Endothelial cell of umbilical vein (primary cell): ENCODE measurements at regions of chr11 and their contacts with region 1.

Region 1: GRCh38 chr11:117178210-117179034 is at the start of gene SIDT2:
- DNase-seq: peak; percentile 98
- H3K4me3 ChIP-seq: peak within 1 kb of the TSS; percentile 32 to 70 (median 60)
- H3K27ac ChIP-seq: peak within 1 kb of the TSS; percentile 45
- H3K4me1 ChIP-seq: peaks cover 19% of the 10 kb centered on the region
- H3K27me3 ChIP-seq: no peaks in the 10 kb centered on the region
- CTCF ChIP-seq: no peak
- POLR2A ChIP-seq: peak; percentile 78
- total RNA-seq, gene SIDT2: 26.0 and 28.7 TPM in 2 replicates

Region 2: GRCh38 chr11:117045196-117045595 is 133.2 kb before region 1 on chr11:
- CTCF ChIA-PET with region 1: no interaction called
- POLR2A ChIA-PET with region 1: no interaction called
- dilution Hi-C with region 1: no loop called
- intact Hi-C with region 1: no loop called
- DNase-seq: no peak
- H3K4me3 ChIP-seq: no peak overlapping the region
- H3K27ac ChIP-seq: no peak overlapping the region
- H3K4me1 ChIP-seq: peaks cover 6% of the 10 kb centered on the region
- H3K27me3 ChIP-seq: no peaks in the 10 kb centered on the region
- CTCF ChIP-seq: no peak
- POLR2A ChIP-seq: no peak

Region 3: DNA sequence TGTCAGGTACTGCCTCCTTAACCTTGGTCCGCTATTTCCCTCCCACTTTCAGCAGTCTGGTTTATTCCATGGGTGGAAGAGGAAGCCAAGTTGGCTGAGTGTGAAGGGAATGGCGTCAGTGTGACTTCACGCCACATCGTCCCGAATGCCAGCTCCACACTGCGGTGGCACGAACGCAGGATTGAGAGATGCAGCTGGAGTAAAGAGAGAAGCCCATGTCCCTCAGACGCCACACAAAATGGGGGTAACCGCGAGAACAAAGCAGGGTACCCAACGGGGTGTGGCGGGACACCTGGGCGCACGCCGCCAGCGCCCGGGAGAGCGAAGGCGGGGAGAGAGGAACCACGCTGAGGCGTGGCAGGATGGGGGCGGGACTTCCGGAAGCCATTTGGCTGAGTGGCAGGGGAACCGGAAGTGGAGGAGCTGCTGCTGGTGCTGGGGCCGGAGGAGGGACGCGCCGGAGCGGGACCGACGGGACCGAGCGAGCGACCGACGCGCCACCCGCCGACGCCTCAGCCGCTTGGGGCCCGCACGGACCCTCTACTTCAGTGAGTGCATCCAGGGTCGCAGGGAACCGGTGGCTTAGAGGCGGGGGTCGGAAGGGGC is 34.4 kb before region 1 on chr11 and contains the start of gene PAFAH1B2:
- CTCF ChIA-PET with region 1: interaction called, 31 read pairs
- POLR2A ChIA-PET with region 1: interaction called, 4 read pairs
- dilution Hi-C with region 1: no loop called
- intact Hi-C with region 1: loop called (anchors 1 kb)
- DNase-seq: peak; percentile 90
- H3K4me3 ChIP-seq: peak within 1 kb of the TSS; percentile 79 to 95 (median 90)
- H3K27ac ChIP-seq: peak within 1 kb of the TSS; percentile 33
- H3K4me1 ChIP-seq: peaks cover 11% of the 10 kb centered on the region
- H3K27me3 ChIP-seq: no peaks in the 10 kb centered on the region
- CTCF ChIP-seq: no peak
- POLR2A ChIP-seq: peak; percentile 91
- total RNA-seq, gene PAFAH1B2: 128 and 130 TPM in 2 replicates

Region 4: GRCh38 chr11:117199061-117199915 is 20.9 kb after region 1 on chr11 and contains the start of gene TAGLN:
- CTCF ChIA-PET with region 1: interaction called, 5 read pairs
- POLR2A ChIA-PET with region 1: no interaction called
- dilution Hi-C with region 1: no loop called
- intact Hi-C with region 1: loop called (anchors 2 kb)
- DNase-seq: peak; percentile 37
- H3K4me3 ChIP-seq: peak within 1 kb of the TSS in 2 of 3 experiments; percentile 12 to 17
- H3K27ac ChIP-seq: no peak within 1 kb of the TSS
- H3K4me1 ChIP-seq: peaks cover 9% of the 10 kb centered on the region
- H3K27me3 ChIP-seq: no peaks in the 10 kb centered on the region
- CTCF ChIP-seq: no peak
- POLR2A ChIP-seq: peak; percentile 15
- total RNA-seq, gene TAGLN: 17.9 and 20.8 TPM in 2 replicates

Region 5: GRCh38 chr11:117217141-117218084 is 39.0 kb after region 1 on chr11:
- CTCF ChIA-PET with region 1: interaction called, 11 read pairs
- POLR2A ChIA-PET with region 1: no interaction called
- dilution Hi-C with region 1: no loop called
- intact Hi-C with region 1: no loop called
- DNase-seq: peak; percentile 17
- H3K4me3 ChIP-seq: no peak overlapping the region
- H3K27ac ChIP-seq: peak overlapping the region; percentile 26
- H3K4me1 ChIP-seq: peaks cover 11% of the 10 kb centered on the region
- H3K27me3 ChIP-seq: no peaks in the 10 kb centered on the region
- CTCF ChIP-seq: no peak
- POLR2A ChIP-seq: no peak

Region 6: GRCh38 chr11:117226388-117227385 is 48.3 kb after region 1 on chr11:
- CTCF ChIA-PET with region 1: interaction called, 90 read pairs
- POLR2A ChIA-PET with region 1: interaction called, 4 read pairs
- dilution Hi-C with region 1: no loop called
- intact Hi-C with region 1: loop called (anchors 1 kb)
- DNase-seq: peak; percentile 73
- H3K4me3 ChIP-seq: no peak overlapping the region
- H3K27ac ChIP-seq: no peak overlapping the region
- H3K4me1 ChIP-seq: peaks cover 10% of the 10 kb centered on the region
- H3K27me3 ChIP-seq: no peaks in the 10 kb centered on the region
- CTCF ChIP-seq: peak; percentile 65 to 76
- POLR2A ChIP-seq: no peak

Region 7: DNA sequence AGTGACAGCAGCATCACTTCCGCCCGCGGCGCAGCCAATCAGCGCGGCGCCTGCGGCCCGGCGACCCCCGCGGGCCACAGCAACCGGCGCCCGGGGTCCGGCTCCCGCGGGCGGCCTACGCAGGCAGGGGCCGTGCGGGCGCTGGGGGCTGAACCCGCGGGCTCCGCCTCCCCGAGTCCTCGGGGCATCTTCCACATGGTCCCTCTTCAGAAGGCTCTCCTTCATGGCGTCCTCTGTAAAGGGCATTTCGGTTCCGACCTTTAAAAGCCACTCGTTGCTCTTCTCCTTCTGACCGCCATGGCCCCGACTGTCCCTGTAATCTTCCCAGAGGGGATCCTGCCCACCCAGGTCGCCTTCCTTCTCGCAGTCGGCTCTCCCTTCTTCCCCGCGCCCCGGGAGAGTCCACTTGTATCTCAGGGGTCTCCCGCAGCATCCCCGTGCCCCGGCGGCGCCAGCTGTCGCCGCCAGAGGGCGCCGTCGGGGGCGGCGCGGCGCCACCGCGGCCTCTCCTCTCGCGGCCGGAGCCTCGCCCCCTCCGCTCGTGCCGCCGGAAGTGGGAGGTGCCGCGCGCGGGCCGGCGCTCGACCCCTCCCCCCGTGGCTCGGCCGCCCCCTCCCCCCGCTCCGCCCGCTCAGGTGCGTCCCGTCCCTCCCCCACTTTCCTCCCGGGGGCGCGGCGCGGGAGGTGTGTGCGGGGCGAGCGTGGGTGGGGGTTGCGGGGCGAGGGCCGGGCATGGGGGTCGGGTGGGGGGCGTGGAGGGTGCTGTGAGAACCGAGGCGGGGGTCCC is 53.9 kb after region 1 on chr11 and contains the start of gene RNF214:
- CTCF ChIA-PET with region 1: interaction called, 90 read pairs
- POLR2A ChIA-PET with region 1: interaction called, 4 read pairs
- dilution Hi-C with region 1: no loop called
- intact Hi-C with region 1: loop called (anchors 1 kb)
- DNase-seq: peak; percentile 79
- H3K4me3 ChIP-seq: peak within 1 kb of the TSS; percentile 82 to 97 (median 90)
- H3K27ac ChIP-seq: peak within 1 kb of the TSS; percentile 89
- H3K4me1 ChIP-seq: peaks cover 20% of the 10 kb centered on the region
- H3K27me3 ChIP-seq: no peaks in the 10 kb centered on the region
- CTCF ChIP-seq: peak; percentile 81 to 99
- POLR2A ChIP-seq: peak; percentile 49
- total RNA-seq, gene RNF214: 26.1 and 28.2 TPM in 2 replicates

Region 8: DNA sequence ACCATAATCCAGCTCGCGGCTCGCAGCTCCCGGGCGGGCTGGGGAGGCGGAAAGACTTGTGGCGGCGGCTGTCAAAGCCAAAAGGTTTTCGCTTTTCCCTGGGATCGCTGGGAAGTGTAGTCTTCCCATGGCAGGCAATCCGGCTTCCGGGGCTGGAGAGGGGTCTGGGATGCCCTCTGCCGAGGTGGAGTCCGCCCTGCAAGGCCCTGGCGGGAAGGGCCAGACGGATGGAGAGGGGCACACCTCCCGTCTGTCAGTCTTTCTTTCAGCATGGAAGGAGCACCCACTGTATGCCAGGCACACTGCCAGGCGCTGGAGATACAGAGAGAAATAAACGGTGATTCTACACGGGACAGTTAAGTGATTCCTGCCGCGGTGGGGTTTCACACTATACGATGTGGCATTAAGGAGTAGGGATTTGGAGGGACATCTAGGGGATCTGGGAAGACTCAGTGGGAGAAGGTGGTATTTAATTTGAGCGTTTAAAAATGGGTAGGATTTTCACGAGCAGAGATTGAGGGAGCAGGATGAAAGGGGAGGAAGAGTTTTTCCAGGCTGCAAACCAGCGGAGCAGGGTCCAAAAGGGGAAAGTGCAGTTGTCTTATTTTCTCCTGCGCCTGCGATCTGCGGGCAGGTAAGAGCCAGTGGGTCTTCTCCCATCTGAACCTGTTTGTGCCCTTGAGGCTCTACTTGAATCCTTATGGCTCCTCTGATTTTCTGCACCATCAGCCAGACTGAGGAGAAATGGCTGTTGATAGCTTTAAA is 138.0 kb after region 1 on chr11 and contains the start of gene BACE1:
- CTCF ChIA-PET with region 1: no interaction called
- POLR2A ChIA-PET with region 1: no interaction called
- dilution Hi-C with region 1: no loop called
- intact Hi-C with region 1: loop called (anchors 5 kb)
- DNase-seq: peak; percentile 82
- H3K4me3 ChIP-seq: peak within 1 kb of the TSS; percentile 3 to 68 (median 41)
- H3K27ac ChIP-seq: peak within 1 kb of the TSS; percentile 34
- H3K4me1 ChIP-seq: peaks cover 14% of the 10 kb centered on the region
- H3K27me3 ChIP-seq: no peaks in the 10 kb centered on the region
- CTCF ChIP-seq: peak in 1 of 2 donors; percentile 29
- POLR2A ChIP-seq: peak; percentile 47
- total RNA-seq, gene BACE1: 28.8 and 29.3 TPM in 2 replicates

Region 9: GRCh38 chr11:117501237-117501898 is 322.9 kb after region 1 on chr11:
- CTCF ChIA-PET with region 1: no interaction called
- POLR2A ChIA-PET with region 1: no interaction called
- dilution Hi-C with region 1: no loop called
- intact Hi-C with region 1: no loop called
- DNase-seq: no peak
- H3K4me3 ChIP-seq: no peak overlapping the region
- H3K27ac ChIP-seq: no peak overlapping the region
- H3K4me1 ChIP-seq: no peaks in the 10 kb centered on the region
- H3K27me3 ChIP-seq: no peaks in the 10 kb centered on the region
- CTCF ChIP-seq: no peak
- POLR2A ChIP-seq: no peak